ENCODE measurements at regions of chr3 and their contacts with region 1.

Region 1: DNA sequence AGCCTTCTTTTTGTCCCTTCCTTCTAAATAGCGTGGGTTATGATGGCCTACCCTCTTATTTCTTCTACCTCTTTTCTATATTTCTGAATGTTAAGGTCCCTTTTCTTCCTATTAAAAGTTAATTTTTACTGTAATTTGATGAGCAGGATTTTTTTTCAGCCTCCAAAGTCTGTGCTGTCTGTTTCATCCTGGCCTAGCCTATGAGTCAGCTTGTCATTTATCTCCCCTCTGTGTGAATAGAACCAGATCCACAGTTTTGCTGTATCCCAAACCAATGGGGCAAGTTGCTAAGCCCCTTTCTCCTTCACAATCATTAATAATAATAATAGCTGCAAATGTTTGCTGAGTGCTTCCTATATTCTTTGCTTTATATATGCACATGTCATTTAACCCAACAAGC is 18.1 kb upstream of the C3orf38 start:
- DNase-seq: no peak
- H3K4me3 ChIP-seq: no peak overlapping the region
- H3K27ac ChIP-seq: no peak overlapping the region
- H3K4me1 ChIP-seq: no peaks in the 10 kb centered on the region
- H3K27me3 ChIP-seq: no peaks in the 10 kb centered on the region

Region 2: GRCh38 chr3:88113311-88114162 is 18.2 kb before region 1 on chr3:
- CTCF ChIA-PET with region 1: interaction called, 10 read pairs
- POLR2A ChIA-PET with region 1: no interaction called
- DNase-seq: peak; percentile 81 to 89 (median 83)
- H3K4me3 ChIP-seq: no peak overlapping the region
- H3K27ac ChIP-seq: no peak overlapping the region
- H3K4me1 ChIP-seq: peaks cover 0 to 2% (median 0%) of the 10 kb centered on the region in 4 experiments
- H3K27me3 ChIP-seq: no peaks in the 10 kb centered on the region

Region 3: DNA sequence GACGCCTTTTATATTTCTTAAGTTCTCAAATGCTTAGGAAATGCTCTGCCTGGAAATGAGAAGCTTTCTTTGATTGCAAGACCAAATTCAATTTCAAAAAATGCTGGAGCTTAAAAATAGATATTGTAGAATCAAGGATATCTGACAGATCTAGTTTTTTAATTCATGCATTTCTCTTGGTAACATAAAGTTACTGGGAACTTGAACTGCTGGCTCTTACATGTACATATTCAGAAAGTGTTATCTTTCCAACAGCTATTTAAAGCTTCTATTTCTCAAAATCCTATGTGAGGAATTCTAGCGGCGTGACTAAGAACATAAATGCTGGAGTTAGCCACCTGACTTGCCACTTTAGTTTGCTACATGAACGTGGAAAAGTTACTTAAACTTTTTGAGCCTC is 127.3 kb after region 1 on chr3:
- CTCF ChIA-PET with region 1: no interaction called
- POLR2A ChIA-PET with region 1: no interaction called
- DNase-seq: no peak
- H3K4me3 ChIP-seq: no peak overlapping the region
- H3K27ac ChIP-seq: no peak overlapping the region
- H3K4me1 ChIP-seq: no peaks in the 10 kb centered on the region
- H3K27me3 ChIP-seq: no peaks in the 10 kb centered on the region

Region 4: DNA sequence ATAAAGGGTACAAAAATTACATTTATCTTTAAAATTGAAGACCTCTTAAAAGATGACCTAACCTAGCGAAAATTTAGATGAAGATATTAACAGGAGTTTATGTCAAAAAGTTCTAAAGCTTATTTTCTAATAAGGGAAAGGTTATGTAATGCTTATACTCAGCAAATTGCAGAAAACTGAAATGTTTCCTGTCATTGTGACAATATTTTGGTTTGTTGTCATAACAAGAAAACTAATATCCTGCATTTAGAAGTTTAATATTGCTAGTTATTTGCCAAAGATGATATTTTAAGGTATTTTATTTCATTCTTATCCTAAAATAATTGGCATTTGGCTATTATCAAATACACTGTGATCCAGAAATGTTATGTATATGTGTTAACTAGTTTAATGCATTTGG is 312.6 kb after region 1 on chr3:
- CTCF ChIA-PET with region 1: no interaction called
- POLR2A ChIA-PET with region 1: no interaction called
- DNase-seq: no peak
- H3K4me3 ChIP-seq: no peak overlapping the region
- H3K27ac ChIP-seq: no peak overlapping the region
- H3K4me1 ChIP-seq: peaks cover 0 to 6% (median 1%) of the 10 kb centered on the region in 4 experiments
- H3K27me3 ChIP-seq: no peaks in the 10 kb centered on the region